Mammary epithelial cell (primary cell): ENCODE measurements at regions of chr6 and their contacts with region 1.

Region 1: GRCh38 chr6:31901953-31902643 is at the start of gene ZBTB12:
- DNase-seq: peak; percentile 82
- H3K4me3 ChIP-seq: peak within 1 kb of the TSS; percentile 35 to 67 (median 55)
- H3K27ac ChIP-seq: no peak within 1 kb of the TSS
- H3K4me1 ChIP-seq: peaks cover 11% of the 10 kb centered on the region
- H3K27me3 ChIP-seq: no peaks in the 10 kb centered on the region
- CTCF ChIP-seq: no peak
- total RNA-seq, gene ZBTB12: 0.33 to 2.7 TPM

Region 2: DNA sequence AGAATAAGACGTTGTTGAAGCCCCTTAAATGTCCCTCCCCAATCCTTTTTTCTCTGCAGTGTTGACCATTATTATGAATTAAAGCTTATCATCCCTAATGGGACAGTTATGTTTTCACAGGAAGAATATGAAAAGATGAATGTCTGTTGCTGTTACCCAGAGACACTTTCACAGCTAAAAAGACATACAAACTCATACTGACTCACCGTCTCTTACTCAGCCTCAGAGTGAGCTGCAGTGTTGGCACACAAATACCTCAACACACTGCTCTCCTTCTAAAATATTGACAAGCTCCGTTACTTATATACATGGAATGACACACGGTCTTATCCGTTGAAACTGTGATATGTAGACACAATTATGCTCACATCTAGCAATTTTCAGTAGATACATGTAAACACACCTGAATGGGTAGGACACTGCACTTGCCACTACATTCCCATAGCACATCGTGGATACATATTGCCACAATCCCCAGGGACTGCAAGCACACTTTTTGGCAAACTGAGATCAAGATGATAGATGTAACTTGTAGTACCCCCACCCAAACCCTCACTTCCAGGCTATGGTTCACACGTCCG is 149.3 kb before region 1 on chr6:
- CTCF ChIA-PET with region 1: no interaction called
- dilution Hi-C with region 1: no loop called
- in situ Hi-C with region 1: no loop called
- intact Hi-C with region 1: no loop called
- DNase-seq: peak; percentile 52
- H3K4me3 ChIP-seq: no peak overlapping the region
- H3K27ac ChIP-seq: no peak overlapping the region
- H3K4me1 ChIP-seq: no peaks in the 10 kb centered on the region
- H3K27me3 ChIP-seq: no peaks in the 10 kb centered on the region
- CTCF ChIP-seq: no peak

Region 3: DNA sequence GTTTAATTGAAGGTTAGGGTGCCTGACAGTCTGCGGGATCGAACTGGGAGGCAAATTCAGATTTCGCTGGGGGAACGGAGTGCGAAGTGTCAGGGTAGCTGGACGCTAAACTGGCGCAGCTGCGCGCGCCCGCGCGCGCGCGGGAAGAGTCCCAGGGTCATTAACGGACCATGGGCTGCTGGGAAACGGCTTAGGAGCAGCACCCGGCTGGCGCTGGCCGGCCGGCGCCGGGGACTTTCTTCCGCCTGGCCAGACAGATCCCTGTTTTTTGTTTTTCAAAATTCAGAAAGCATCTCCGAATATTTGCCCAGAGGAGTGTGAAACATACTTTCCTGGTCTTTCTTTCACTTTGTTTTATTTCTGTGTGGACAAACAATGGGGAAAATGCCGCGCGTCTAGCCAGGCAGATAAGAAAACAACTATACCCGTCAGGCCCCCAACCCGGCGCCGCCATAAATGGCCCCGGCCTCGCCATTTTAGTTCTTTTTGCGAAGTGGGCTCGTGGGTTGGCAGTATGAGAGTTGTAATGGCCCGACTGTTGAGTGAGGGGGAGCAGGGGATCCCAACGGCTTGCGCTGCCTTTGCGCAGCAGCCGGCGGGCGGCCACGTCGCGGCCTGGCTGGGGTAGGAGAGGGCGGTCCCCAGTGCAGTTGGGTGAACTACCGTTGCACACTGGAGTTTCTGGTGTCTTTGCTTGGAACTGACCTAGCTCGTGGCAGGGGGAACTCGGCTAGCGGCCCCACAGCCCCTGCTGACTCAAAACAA is 67.5 kb before region 1 on chr6:
- CTCF ChIA-PET with region 1: no interaction called
- dilution Hi-C with region 1: no loop called
- in situ Hi-C with region 1: no loop called
- intact Hi-C with region 1: loop called (anchors 2 kb)
- DNase-seq: peak; percentile 86
- H3K4me3 ChIP-seq: peak overlapping the region; percentile 73 to 96 (median 82)
- H3K27ac ChIP-seq: peak overlapping the region; percentile 95
- H3K4me1 ChIP-seq: peaks cover 27% of the 10 kb centered on the region
- H3K27me3 ChIP-seq: no peaks in the 10 kb centered on the region
- CTCF ChIP-seq: no peak

Region 4: DNA sequence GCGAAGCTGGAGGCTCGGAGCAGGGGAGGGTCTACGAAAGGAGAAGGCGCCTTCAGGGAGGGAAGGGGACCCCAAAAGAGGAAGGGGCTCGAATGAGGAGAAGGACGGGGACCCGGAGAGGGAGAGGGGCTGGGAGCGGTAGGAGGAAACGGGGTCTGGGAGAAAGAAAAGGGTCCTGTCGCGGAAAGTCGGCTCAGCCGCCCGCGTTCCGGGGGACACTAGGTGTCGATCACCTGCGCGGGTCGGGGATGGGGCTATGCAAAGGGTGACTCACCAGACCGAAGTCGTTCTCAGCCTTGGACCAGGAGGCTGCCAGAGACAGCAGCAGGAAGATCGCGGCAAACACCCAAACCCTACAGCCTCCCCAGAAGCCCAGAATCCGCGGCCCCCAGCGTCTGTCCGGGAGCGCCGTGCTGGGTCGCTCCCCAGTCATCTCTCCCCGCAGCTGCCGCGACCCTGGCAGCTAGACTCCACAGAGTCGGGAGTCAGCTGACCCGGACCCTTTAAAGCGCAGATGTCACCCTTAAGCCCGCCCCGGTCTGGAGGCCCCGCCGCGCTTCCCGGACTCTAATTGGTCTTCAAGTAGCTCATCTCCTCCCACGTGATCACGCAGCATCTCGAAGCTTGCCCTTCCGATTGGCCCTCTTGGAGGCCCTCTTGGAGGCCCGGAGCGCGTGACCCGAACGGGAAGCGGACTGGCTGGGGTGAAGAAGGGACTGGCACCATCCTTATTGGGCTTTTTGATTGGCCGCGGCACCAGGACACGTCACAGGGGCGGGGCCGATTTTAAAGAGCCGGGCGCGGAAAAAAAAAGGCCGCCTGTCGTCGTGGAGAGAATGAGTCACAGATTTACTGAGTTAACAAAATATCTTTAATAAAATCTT is 39.5 kb before region 1 on chr6 and contains the start of gene NEU1:
- CTCF ChIA-PET with region 1: interaction called, 12 read pairs
- dilution Hi-C with region 1: no loop called
- in situ Hi-C with region 1: no loop called
- intact Hi-C with region 1: loop called (anchors 2 kb)
- DNase-seq: peak; percentile 100
- H3K4me3 ChIP-seq: peak within 1 kb of the TSS; percentile 76 to 94 (median 86)
- H3K27ac ChIP-seq: peak within 1 kb of the TSS; percentile 50
- H3K4me1 ChIP-seq: peaks cover 10% of the 10 kb centered on the region
- H3K27me3 ChIP-seq: no peaks in the 10 kb centered on the region
- CTCF ChIP-seq: no peak
- total RNA-seq, gene NEU1: 27.8 to 42.5 TPM

Region 5: GRCh38 chr6:31920811-31921210 is 18.7 kb after region 1 on chr6:
- CTCF ChIA-PET with region 1: interaction called, 20 read pairs
- dilution Hi-C with region 1: no loop called
- in situ Hi-C with region 1: no loop called
- intact Hi-C with region 1: no loop called
- DNase-seq: no peak
- H3K4me3 ChIP-seq: no peak overlapping the region
- H3K27ac ChIP-seq: no peak overlapping the region
- H3K4me1 ChIP-seq: no peaks in the 10 kb centered on the region
- H3K27me3 ChIP-seq: no peaks in the 10 kb centered on the region
- CTCF ChIP-seq: no peak

Region 6: GRCh38 chr6:31952140-31952805 is 50.2 kb after region 1 on chr6:
- CTCF ChIA-PET with region 1: no interaction called
- dilution Hi-C with region 1: loop called (anchors 5 kb)
- in situ Hi-C with region 1: loop called (anchors 5 to 10 kb)
- intact Hi-C with region 1: loop called (anchors 1 kb)
- DNase-seq: peak; percentile 41
- H3K4me3 ChIP-seq: no peak overlapping the region
- H3K27ac ChIP-seq: no peak overlapping the region
- H3K4me1 ChIP-seq: no peaks in the 10 kb centered on the region
- H3K27me3 ChIP-seq: no peaks in the 10 kb centered on the region
- CTCF ChIP-seq: peak; percentile 74 to 87

Region 7: DNA sequence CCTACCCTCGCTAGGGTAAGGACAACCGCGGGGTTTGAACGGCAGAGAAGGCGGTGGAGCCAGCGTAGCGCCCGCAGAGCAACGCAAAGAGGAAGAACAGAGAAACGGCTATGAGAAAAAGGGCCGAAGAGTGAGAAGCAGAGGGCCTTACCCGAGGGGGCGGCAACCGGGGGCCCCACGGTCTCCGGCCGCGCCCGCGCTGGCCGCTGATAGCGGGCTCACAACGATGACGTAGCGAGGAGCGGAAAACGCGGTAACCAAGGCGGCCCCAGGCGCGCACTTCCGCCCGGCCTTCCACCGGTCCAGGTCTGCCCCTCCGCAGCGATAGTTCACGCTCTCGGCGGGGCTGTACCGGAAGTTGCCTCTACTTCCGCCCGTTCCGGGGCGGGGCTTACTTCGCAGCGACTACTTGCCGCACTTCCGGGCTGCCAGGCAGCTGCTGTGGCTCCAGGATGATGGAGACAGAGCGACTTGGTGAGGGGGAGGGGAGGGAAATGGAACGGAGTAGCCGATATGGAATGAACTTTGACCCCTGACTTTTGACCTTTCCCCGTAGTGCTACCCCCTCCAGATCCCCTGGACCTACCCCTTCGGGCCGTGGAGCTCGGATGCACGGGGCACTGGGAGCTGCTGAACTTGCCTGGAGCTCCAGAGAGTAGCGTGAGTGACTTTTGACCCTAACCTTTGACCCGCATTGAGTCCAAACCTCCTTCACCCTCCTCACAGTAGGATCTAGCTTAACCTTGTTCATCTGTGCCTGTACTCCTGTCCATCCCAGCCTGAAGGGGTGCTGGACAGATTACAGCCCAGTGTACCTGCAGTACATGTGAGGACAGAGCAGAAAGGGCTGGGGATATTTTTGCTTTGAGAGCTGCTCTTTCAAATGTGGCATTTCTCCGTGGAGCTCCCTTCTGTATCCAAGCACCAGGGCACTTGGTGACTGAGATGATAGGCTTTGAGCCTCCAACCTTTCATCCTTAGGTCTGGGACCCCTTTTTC is 56.9 kb after region 1 on chr6 and contains the starts of genes NELFE and SKIC2:
- CTCF ChIA-PET with region 1: no interaction called
- dilution Hi-C with region 1: no loop called
- in situ Hi-C with region 1: loop called in 1 of 2 experiments (anchors 10 kb)
- intact Hi-C with region 1: no loop called
- DNase-seq: peak; percentile 98
- H3K4me3 ChIP-seq: peak within 1 kb of the TSS; percentile 82 to 95 (median 92)
- H3K27ac ChIP-seq: peak within 1 kb of the TSS; percentile 79
- H3K4me1 ChIP-seq: peaks cover 12% of the 10 kb centered on the region
- H3K27me3 ChIP-seq: no peaks in the 10 kb centered on the region
- CTCF ChIP-seq: no peak
- total RNA-seq, gene NELFE: 69.7 to 77.7 TPM
- total RNA-seq, gene SKIC2: 46.7 to 51.1 TPM